Heart right ventricle (tissue), 16 donors: ENCODE measurements at regions of chrX and their contacts with region 1.

Region 1: GRCh38 chrX:86809651-86810050 is 661.4 kb downstream of the DACH2 start:
- DNase-seq: no peak
- ATAC-seq: no peak
- H3K4me3 ChIP-seq: no peak overlapping the region
- H3K27ac ChIP-seq: no peak overlapping the region
- H3K4me1 ChIP-seq: no peaks in the 10 kb centered on the region
- H3K27me3 ChIP-seq: peaks cover 0 to 4% (median 0%) of the 10 kb centered on the region in 7 donors
- CTCF ChIP-seq: no peak

Region 2: DNA sequence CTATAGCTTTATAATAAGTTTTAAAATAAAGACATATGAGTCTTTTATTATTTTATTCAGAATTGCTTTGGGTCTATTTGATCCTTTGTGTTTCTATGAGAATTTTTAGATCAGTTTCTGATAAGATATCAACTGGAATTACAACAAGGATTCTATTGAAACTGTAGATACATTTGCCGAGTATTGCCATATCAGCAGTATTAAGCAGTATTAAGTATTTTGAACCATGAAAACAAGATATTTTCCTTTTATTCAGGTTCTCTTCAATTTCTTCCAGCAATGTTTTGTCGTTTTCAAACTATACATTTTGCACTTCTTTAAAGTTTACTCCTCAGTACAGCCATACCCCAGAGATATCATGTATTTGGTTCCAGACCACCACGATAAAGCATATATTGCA is 62.6 kb before region 1 on chrX:
- intact Hi-C with region 1: no loop called
- DNase-seq: no peak
- ATAC-seq: no peak
- H3K4me3 ChIP-seq: no peak overlapping the region
- H3K27ac ChIP-seq: no peak overlapping the region
- H3K4me1 ChIP-seq: no peaks in the 10 kb centered on the region
- H3K27me3 ChIP-seq: no peaks in the 10 kb centered on the region
- CTCF ChIP-seq: no peak

Region 3: GRCh38 chrX:87299563-87300160 is 490.0 kb after region 1 on chrX:
- intact Hi-C with region 1: loop called in 1 of 10 experiments (anchors 10 kb)
- DNase-seq: no peak
- ATAC-seq: no peak
- H3K4me3 ChIP-seq: no peak overlapping the region
- H3K27ac ChIP-seq: no peak overlapping the region
- H3K4me1 ChIP-seq: no peaks in the 10 kb centered on the region
- H3K27me3 ChIP-seq: peaks cover 0 to 8% (median 0%) of the 10 kb centered on the region in 7 donors
- CTCF ChIP-seq: peak in 8 of 9 donors; percentile 10 to 60 (median 50)